Dendritic cell treated with granulocyte-macrophage colony-stimulating factor and Interleukin-4, amounts not matched to agents 40 ng/mL and 50 ng/mL, for 4 days (primary cell): ENCODE measurements at regions of chr11 and their contacts with region 1.

Region 1: DNA sequence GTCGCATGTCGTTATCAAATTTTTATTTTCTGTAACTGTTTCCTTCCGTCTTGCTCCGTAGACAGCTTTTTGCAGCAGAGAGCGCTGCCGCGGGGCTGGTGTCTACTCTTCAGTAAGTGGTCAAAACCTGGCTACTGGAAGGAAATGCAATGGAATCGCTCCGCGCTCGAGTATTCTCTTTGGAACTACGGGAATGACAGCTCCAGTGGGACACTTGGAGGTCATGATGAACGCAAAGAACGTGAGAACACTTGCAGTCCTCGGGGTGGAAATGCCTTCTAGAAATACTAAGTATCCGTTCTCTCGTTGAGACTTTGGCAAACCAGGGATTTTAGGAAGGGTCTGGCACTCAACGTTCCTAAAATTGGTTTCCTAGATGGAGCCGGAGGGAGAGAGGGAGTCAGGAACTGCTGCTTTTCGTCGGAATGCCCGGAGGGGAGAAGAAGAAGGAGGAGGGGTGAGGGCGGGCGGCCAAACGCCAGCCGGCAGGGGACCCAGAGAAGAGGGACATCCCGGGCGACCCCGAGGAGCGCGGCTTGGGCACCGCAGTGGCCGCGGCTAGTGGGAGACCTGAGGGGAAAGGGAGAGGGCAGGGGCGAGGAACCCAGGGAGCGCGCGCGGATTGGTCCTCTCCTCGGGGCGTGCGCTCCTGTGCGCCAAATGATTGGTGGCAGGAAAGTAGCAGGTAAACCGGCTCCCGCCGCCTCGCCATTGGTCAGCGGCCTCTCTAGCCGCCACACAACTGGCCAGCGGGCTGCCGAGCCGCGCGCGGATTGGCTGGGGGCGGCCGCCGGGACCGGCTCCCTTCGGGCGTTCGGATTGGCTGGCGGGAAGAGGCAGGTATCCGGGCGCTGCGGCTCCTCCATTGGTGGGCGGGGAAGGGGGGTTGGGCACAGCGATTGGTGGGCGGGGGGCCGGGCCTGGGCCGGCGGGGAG is 490 bp upstream of the BMAL1 start:
- H3K4me3 Mint-ChIP-seq: peak overlapping the region; percentile 86
- H3K27ac Mint-ChIP-seq: peak overlapping the region; percentile 74
- H3K4me1 Mint-ChIP-seq: peaks cover 43% of the 10 kb centered on the region
- H3K27me3 Mint-ChIP-seq: peaks cover 37% of the 10 kb centered on the region

Region 2: GRCh38 chr11:13210424-13210823 is 66.7 kb before region 1 on chr11:
- intact Hi-C with region 1: loop called (anchors 5 kb)
- H3K4me3 Mint-ChIP-seq: no peak overlapping the region
- H3K27ac Mint-ChIP-seq: peak overlapping the region; percentile 10
- H3K4me1 Mint-ChIP-seq: peaks cover 54% of the 10 kb centered on the region
- H3K27me3 Mint-ChIP-seq: no peaks in the 10 kb centered on the region

Region 3: DNA sequence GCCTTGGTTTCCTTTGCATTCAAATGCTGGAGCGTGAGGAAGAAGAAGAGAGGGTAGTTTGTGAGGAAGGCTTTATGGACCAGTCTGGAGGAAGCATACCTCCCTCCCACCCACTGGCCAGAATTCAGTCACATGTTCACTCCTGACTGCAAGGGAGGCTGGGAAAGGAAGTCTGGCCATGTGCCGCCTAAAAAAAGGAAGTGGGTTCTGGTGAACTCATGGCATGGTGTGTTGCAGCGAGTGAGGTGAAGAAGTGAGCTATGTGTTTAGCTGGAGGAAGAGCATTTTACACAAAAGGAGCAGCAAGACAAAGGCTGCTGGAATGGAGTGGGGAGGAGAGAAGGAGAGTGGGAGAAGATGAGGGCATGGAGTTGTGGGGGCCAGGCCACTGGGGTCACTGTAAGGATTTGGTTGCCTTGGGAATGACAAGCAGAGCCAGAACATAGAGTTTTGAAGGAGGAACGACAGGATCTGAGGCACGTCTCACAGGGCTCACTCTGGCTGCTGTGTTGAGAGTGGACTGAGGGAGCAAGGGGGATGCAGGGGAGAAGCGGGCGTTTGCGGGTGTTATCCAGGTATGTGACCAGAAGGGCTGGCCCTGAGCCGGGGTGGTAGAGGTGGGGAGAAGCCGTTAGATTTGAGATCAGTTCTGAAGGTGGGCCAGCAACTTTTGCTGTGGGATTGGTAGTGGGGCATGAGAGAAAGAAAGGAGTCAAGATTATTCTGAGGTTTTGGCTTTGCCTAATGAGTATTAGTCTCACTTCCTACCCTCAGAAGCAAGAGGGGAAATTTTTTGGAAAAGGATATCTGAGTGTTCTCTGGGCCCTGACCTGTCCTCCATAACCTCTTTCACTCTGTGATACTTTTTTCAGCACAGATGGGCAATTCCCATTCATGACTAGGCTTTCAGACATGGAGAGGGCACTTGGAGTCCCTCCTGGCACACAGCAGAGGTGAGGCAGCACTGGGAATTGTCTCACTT is 26.9 kb after region 1 on chr11:
- intact Hi-C with region 1: loop called (anchors 2 kb)
- H3K4me3 Mint-ChIP-seq: peak overlapping the region; percentile 11
- H3K27ac Mint-ChIP-seq: peak overlapping the region; percentile 69
- H3K4me1 Mint-ChIP-seq: peaks cover 58% of the 10 kb centered on the region
- H3K27me3 Mint-ChIP-seq: no peaks in the 10 kb centered on the region

Region 4: GRCh38 chr11:13335319-13335718 is 58.2 kb after region 1 on chr11:
- intact Hi-C with region 1: loop called (anchors 5 kb)
- H3K4me3 Mint-ChIP-seq: no peak overlapping the region
- H3K27ac Mint-ChIP-seq: no peak overlapping the region
- H3K4me1 Mint-ChIP-seq: peaks cover 70% of the 10 kb centered on the region
- H3K27me3 Mint-ChIP-seq: no peaks in the 10 kb centered on the region

Region 5: GRCh38 chr11:13462901-13463778 is 186.0 kb after region 1 on chr11 and contains the start of gene BTBD10:
- intact Hi-C with region 1: loop called (anchors 1 kb)
- H3K4me3 Mint-ChIP-seq: peak within 1 kb of the TSS; percentile 99
- H3K27ac Mint-ChIP-seq: peak within 1 kb of the TSS; percentile 100
- H3K4me1 Mint-ChIP-seq: peaks cover 35% of the 10 kb centered on the region
- H3K27me3 Mint-ChIP-seq: no peaks in the 10 kb centered on the region